ENCODE measurements at regions of chr1 and their contacts with region 1.

Region 1: GRCh38 chr1:100895540-100896483 is at the start of gene SLC30A7:
- DNase-seq: peak; percentile 89 to 97
- H3K4me3 ChIP-seq: peak within 1 kb of the TSS; percentile 76
- H3K27ac ChIP-seq: peak within 1 kb of the TSS; percentile 95
- H3K4me1 ChIP-seq: peaks cover 31% of the 10 kb centered on the region
- H3K27me3 ChIP-seq: no peaks in the 10 kb centered on the region
- CTCF ChIP-seq: no peak
- total RNA-seq, gene SLC30A7: 18.4 and 27.4 TPM in 2 replicates

Region 2: GRCh38 chr1:99599678-99600175 is 1296.1 kb before region 1 on chr1:
- CTCF ChIA-PET with region 1: no interaction called
- POLR2A ChIA-PET with region 1: interaction called, 15 read pairs
- intact Hi-C with region 1: no loop called
- DNase-seq: peak; percentile 50 to 66
- H3K4me3 ChIP-seq: no peak overlapping the region
- H3K27ac ChIP-seq: no peak overlapping the region
- H3K4me1 ChIP-seq: peaks cover 8% of the 10 kb centered on the region; the same call in 1 of the 2 replicates
- H3K27me3 ChIP-seq: no peaks in the 10 kb centered on the region
- CTCF ChIP-seq: no peak

Region 3: GRCh38 chr1:100132566-100133477 is 763.0 kb before region 1 on chr1 and contains the starts of genes SASS6 and TRMT13:
- CTCF ChIA-PET with region 1: no interaction called
- POLR2A ChIA-PET with region 1: interaction called, 5 read pairs
- intact Hi-C with region 1: loop called (anchors 10 kb)
- DNase-seq: peak; percentile 91 to 98
- H3K4me3 ChIP-seq: peak within 1 kb of the TSS; percentile 87
- H3K27ac ChIP-seq: peak within 1 kb of the TSS; percentile 40
- H3K4me1 ChIP-seq: peaks cover 34% of the 10 kb centered on the region
- H3K27me3 ChIP-seq: no peaks in the 10 kb centered on the region
- CTCF ChIP-seq: no peak
- total RNA-seq, gene SASS6: 5.1 and 8.7 TPM in 2 replicates
- total RNA-seq, gene TRMT13: 7.3 and 14.2 TPM in 2 replicates

Region 4: DNA sequence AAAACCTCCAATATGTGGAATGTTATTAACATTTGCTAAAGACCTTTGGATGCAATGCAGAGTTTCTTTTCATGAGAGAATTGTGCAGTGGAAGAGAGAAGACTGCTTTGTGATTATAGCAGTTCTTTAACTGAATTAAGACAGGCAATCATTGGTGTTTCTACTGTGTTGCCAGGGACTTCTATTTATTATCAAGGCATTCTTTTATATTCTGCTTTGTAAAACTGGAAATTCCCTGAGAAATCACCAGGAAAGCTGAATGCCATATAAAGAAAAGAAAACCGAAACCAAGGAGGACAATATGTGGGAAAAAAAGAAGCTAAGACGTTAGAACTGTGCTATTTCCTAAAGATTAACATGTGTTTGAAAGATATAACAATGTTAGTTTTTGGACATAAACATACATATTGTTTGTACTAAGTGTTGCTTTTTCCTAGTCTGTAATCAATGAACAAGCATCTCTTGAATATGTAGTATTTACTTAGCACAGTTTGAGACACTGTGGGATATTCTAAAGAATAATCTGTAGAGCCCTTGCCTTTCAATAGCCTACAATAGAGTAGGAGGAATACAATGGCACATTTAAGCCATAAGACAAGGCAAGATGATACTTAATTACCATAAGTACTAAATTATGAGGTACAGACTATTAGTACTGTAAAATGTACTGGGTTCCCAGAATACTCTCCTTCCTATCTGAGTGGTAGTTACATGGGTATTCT is 48.3 kb before region 1 on chr1:
- CTCF ChIA-PET with region 1: no interaction called
- POLR2A ChIA-PET with region 1: no interaction called
- intact Hi-C with region 1: no loop called
- DNase-seq: no peak
- H3K4me3 ChIP-seq: no peak overlapping the region
- H3K27ac ChIP-seq: no peak overlapping the region
- H3K4me1 ChIP-seq: no peaks in the 10 kb centered on the region
- H3K27me3 ChIP-seq: no peaks in the 10 kb centered on the region
- CTCF ChIP-seq: no peak

Region 5: DNA sequence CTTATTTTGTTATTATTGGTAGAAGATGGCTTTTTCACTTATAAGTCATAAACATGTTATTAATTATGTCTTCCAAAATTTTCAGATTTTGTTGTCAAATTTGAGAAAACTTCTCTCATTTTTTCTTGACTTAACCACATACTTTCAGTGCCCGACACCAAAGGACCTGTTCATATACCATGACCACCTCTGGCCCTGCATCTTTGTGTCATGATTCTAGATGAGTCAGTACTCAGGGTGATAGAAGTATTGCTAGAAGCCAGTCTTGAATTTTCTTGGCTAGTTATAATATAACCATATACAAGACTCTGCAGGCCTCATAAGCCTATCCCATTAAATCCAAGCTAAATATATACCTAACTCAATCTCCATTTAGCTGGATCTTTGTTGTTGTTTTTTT is 165.2 kb after region 1 on chr1:
- CTCF ChIA-PET with region 1: no interaction called
- POLR2A ChIA-PET with region 1: interaction called, 19 read pairs
- intact Hi-C with region 1: no loop called
- DNase-seq: no peak
- H3K4me3 ChIP-seq: no peak overlapping the region
- H3K27ac ChIP-seq: no peak overlapping the region
- H3K4me1 ChIP-seq: no peaks in the 10 kb centered on the region
- H3K27me3 ChIP-seq: no peaks in the 10 kb centered on the region
- CTCF ChIP-seq: no peak

Region 6: DNA sequence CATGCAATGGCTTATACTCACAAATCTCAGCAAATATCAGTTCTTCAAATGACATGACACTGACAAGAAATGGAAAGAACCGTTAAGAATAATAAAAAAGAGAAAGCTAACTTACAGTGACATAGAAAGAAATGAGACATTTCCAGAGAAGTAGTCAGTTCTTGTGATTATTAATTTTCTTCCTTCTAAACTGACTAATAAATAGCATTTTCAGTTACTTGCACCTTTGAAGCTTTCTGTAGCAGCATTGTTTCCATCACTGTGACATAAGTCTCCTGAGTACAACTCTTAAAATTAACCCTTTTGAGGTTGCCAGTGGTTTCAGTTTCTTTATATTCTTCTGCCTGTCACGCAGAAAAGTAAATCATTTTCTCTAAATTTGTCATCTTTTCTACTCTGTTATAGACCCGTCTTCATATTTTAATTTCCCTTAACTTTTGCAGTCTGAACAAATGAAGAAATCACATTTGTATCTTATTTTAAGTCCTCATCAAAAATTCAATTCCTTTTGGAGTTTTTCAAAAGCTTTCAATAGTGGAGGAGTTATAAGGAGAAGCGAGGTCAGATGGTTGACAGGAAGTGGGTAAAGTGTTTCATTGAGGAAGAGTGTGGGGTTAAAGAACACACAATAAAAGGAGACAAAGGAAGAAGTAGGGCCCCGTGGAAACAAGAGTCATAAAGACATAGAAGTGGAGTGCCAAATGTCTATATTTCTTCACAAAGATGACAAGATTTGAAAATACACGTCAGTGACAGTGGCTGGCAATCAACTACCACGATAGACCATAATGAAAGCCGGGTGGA is 283.1 kb after region 1 on chr1:
- CTCF ChIA-PET with region 1: no interaction called
- POLR2A ChIA-PET with region 1: interaction called, 10 read pairs
- intact Hi-C with region 1: no loop called
- DNase-seq: no peak
- H3K4me3 ChIP-seq: no peak overlapping the region
- H3K27ac ChIP-seq: no peak overlapping the region
- H3K4me1 ChIP-seq: no peaks in the 10 kb centered on the region
- H3K27me3 ChIP-seq: no peaks in the 10 kb centered on the region
- CTCF ChIP-seq: no peak

Measured in PC-9 (cell line).